HCT116 (cell line): ENCODE measurements at regions of chr19 and their contacts with region 1.

Region 1: DNA sequence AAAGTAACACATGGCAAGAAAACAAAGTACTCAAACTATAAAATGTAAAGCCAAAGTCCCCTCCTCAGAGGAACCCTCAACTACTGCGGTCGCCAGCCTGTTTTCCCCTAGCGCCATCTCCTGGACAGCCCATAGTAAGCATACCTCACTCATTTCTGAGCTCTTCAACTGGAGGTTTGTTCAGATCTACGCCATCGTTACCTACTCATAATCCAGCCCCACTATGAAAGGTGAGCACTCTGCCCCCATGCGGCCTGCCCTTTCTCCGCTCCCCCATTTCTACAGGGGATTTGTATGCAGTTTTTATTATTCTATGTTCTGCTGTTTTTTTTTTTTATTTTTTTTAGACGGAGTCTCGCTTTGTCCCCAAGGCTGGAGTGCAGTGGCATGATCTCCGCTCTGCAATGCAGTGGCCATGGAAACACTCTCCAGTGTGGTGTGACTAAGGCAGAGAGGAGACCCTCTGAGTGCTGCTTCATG is 26.2 kb downstream of the OPA3 start:
- DNase-seq: peak; percentile 81
- ATAC-seq: peak; percentile 99
- H3K4me3 ChIP-seq: no peak overlapping the region
- H3K27ac ChIP-seq: peak overlapping the region; percentile 38; the same call in 1 of the 2 replicates
- H3K4me1 ChIP-seq: peaks cover 6 to 8% of the 10 kb centered on the region in 2 experiments
- H3K27me3 ChIP-seq: no peaks in the 10 kb centered on the region
- CTCF ChIP-seq: peak; percentile 84 to 97 (median 84)
- POLR2A ChIP-seq: no peak
- RAD21 ChIP-seq: peak; percentile 88

Region 2: DNA sequence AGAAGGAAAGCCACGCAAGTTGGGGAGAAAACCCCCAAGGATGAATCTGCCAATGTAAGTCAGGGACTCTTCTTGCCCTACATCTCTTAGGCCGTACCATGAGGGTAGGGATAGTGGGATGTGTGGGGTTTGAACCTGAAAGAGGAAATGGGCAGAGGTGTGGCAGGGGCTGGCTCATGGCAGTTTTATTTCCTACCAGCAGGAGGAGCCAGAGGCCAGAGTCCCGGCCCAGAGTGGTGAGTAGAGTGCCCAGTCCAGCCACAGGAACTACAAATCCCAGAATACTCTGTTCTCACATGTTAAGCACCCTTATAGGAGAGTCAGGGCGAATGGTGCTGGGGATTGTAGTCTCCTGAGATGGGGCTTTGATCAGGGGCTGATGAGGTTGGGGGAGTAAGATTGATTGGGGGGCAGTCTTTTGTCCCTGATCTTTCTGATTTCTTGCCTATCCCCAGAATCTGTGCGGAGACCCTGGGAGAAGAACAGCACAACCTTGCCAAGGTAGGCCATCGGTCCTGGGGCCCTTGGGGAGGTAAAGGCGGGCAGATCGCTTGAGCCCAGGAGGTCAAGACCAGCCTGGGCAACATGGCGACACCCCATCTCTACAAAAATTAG is 34.7 kb before region 1 on chr19:
- CTCF ChIA-PET with region 1: interaction called, 4 read pairs
- POLR2A ChIA-PET with region 1: interaction called, 4 read pairs
- RAD21 ChIA-PET with region 1: interaction called in 1 of 2 experiments, 11 read pairs
- intact Hi-C with region 1: loop called (anchors 1 kb)
- DNase-seq: peak; percentile 76
- ATAC-seq: peak; percentile 85
- H3K4me3 ChIP-seq: no peak overlapping the region
- H3K27ac ChIP-seq: peak overlapping the region; percentile 33
- H3K4me1 ChIP-seq: peaks cover 20 to 64% of the 10 kb centered on the region in 2 experiments; a peak in 3 of 4 replicates
- H3K27me3 ChIP-seq: no peaks in the 10 kb centered on the region
- CTCF ChIP-seq: peak; percentile 85 to 93 (median 90)
- POLR2A ChIP-seq: no peak
- RAD21 ChIP-seq: peak; percentile 95

Region 3: DNA sequence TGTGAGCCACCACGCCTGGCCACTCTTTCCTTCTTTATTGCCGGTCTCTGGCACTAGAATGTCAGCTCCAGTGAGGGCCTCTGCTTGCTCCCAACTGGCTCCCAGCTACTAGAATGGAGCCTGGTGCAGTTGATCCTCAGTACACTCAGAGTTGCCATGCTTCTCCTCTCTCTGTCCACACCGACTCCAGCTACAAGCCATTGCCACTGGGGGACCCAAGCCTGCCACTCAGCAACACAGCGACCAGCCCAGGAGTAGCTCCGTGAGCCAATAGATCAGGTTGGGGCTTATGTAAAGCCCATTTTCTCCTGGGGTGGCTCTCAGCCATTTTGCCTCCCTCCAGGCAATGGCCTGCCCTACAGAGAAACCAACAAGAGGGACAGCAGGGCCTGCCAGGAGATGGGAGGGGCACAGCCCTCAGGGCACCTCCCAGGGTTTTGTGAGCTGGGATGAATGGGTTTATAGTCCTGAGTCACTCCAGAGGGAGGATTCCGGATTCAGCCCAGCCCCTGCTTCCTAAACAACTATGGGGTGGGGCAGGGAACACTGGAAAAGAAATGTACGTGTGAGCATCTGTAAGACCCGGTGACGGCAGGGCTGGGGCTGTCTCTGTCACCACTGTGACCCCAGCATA is 10.3 kb before region 1 on chr19:
- CTCF ChIA-PET with region 1: interaction called, 34 read pairs
- POLR2A ChIA-PET with region 1: no interaction called
- RAD21 ChIA-PET with region 1: interaction called in 1 of 2 experiments, 5 read pairs
- intact Hi-C with region 1: no loop called
- DNase-seq: peak; percentile 86
- ATAC-seq: peak; percentile 98
- H3K4me3 ChIP-seq: peak overlapping the region in 1 of 2 experiments; percentile 14; a peak in 3 of 4 replicates
- H3K27ac ChIP-seq: peak overlapping the region; percentile 65
- H3K4me1 ChIP-seq: peaks cover 13 to 29% of the 10 kb centered on the region in 2 experiments
- H3K27me3 ChIP-seq: no peaks in the 10 kb centered on the region
- CTCF ChIP-seq: no peak
- POLR2A ChIP-seq: no peak
- RAD21 ChIP-seq: no peak

Region 4: DNA sequence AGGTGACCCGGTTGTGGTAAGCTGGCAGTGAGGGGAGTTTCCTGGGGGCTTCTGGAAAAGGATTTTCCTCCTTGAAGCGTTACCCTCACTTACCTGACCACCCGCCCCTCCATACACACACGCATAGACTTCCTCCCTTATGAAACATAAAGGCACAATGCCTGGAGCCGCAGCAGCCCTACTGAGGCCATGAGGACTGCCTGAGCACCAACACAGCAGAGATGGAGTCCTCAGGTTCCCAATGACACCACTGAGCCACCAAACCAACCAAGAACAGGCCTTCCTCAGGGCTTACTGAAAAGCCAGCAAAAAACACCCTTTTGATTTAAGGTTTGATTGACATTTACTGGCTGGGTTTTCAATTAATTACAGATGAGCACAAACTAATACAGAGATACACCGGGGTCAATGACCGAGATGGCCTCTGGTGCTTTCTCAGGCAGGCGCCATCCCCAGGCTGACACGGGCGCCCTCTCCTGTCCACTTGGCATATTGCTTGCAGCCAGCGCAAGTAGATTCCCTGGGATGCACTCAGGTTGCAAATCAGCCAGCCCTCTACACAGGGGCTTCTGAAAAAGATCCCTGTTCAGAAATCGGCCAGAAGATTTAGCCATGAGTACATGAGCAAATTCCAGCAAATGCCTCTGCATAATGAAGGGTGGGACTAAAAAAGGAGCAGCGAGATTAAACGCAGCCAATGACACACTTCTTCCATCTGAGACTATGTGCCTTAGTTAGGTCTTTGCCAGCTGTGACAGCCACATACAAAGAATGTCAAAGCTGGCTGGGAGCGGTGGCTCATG is 11.4 kb after region 1 on chr19:
- CTCF ChIA-PET with region 1: interaction called, 12 read pairs
- POLR2A ChIA-PET with region 1: no interaction called
- RAD21 ChIA-PET with region 1: no interaction called
- intact Hi-C with region 1: no loop called
- DNase-seq: peak; percentile 24
- ATAC-seq: peak; percentile 84
- H3K4me3 ChIP-seq: no peak overlapping the region
- H3K27ac ChIP-seq: peak overlapping the region; percentile 25; the same call in 1 of the 2 replicates
- H3K4me1 ChIP-seq: peaks cover 14 to 28% of the 10 kb centered on the region in 2 experiments
- H3K27me3 ChIP-seq: no peaks in the 10 kb centered on the region
- CTCF ChIP-seq: peak; percentile 70 to 96 (median 93); a peak in 5 of 6 replicates
- POLR2A ChIP-seq: no peak
- RAD21 ChIP-seq: peak; percentile 76

Region 5: DNA sequence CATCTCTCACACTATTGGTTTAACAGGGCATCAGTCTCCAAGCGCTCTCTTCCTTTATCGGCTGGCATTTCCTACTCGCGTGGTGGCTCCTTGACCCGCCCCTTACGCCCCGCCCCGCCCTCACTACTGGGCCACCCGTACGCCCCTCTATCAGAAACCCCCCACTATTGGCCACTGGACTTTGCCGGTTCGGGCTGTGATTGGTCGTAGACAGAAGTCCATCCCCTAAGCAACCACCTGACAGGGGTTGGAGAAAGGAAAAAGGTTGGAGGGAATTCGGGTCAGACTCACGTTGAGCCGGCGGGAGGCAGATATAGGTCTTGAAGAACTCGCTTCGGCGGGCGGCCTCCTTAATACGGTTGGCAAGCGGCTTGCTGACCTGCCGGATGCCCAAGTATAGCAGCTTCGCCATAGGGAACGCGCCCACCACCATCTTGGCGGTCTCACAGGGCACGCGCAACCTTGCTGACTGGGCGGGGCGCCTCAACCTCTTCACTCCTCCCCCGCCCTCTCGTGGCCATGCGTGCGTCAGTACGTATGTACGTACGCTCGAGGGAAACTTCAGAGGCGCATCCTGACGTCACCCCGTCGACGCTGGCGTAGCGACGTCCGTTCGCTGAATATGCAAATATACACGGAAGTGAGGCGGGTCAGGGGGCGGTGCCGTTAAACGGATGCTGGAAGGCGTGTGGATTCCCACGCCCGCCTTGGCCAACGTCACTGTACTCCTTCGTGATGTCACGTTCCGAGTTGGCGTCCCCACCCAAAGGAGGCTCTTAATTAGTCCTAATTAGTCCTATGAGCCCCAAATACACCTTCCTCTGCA is 26.1 kb after region 1 on chr19 and contains the start of gene OPA3:
- CTCF ChIA-PET with region 1: interaction called, 10 read pairs
- POLR2A ChIA-PET with region 1: no interaction called
- RAD21 ChIA-PET with region 1: no interaction called
- intact Hi-C with region 1: no loop called
- DNase-seq: peak; percentile 100
- ATAC-seq: peak; percentile 93
- H3K4me3 ChIP-seq: peak within 1 kb of the TSS; percentile 72 to 97
- H3K27ac ChIP-seq: peak within 1 kb of the TSS; percentile 79
- H3K4me1 ChIP-seq: peaks cover 6 to 7% of the 10 kb centered on the region in 2 experiments; a peak in 3 of 4 replicates
- H3K27me3 ChIP-seq: no peaks in the 10 kb centered on the region
- CTCF ChIP-seq: no peak
- POLR2A ChIP-seq: peak; percentile 30
- RAD21 ChIP-seq: no peak
- total RNA-seq, gene OPA3: 11.1 TPM